ENCODE measurements at regions of chr13 and their contacts with region 1.

Region 1: GRCh38 chr13:79679334-79679733 is 198.4 kb downstream of the NDFIP2 start:
- DNase-seq: peak; percentile 83
- H3K4me3 ChIP-seq: no peak overlapping the region
- H3K27ac ChIP-seq: no peak overlapping the region
- H3K4me1 ChIP-seq: no peaks in the 10 kb centered on the region
- H3K27me3 ChIP-seq: no peaks in the 10 kb centered on the region
- CTCF ChIP-seq: peak; percentile 70 to 80
- POLR2A ChIP-seq: no peak

Region 2: DNA sequence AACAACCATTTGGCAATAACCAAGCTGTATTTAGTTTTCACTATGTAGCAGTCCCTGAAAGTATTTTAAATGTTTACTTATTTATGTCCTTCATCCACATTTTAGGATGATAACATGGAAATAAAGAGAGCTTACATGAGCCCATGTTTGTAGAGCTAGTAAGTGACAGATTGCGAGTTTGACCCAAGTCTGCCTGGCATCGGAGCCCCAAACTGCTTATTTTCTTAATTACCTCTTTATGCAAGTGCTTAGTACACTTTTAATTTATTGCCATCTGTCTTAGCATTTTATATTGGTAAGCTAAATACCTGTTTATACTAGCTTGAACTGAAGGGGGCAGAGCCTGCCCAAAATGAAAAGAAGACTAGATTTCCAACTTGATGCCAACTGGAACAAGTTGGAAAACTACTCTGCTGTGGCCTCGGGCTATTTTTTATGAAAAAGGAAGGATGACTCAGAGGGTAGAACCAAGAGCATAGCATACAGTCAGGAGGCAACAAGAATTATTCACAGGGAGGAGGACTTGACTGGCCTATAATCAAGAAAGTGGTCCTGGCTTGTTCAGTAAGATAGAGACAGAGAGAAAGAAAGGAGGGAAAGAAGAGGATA is 48.2 kb before region 1 on chr13:
- CTCF ChIA-PET with region 1: interaction called, 15 read pairs
- POLR2A ChIA-PET with region 1: no interaction called
- dilution Hi-C with region 1: no loop called
- intact Hi-C with region 1: no loop called
- DNase-seq: peak; percentile 93
- H3K4me3 ChIP-seq: no peak overlapping the region
- H3K27ac ChIP-seq: no peak overlapping the region
- H3K4me1 ChIP-seq: no peaks in the 10 kb centered on the region
- H3K27me3 ChIP-seq: no peaks in the 10 kb centered on the region
- CTCF ChIP-seq: peak in 1 of 2 donors; percentile 27
- POLR2A ChIP-seq: no peak

Region 3: DNA sequence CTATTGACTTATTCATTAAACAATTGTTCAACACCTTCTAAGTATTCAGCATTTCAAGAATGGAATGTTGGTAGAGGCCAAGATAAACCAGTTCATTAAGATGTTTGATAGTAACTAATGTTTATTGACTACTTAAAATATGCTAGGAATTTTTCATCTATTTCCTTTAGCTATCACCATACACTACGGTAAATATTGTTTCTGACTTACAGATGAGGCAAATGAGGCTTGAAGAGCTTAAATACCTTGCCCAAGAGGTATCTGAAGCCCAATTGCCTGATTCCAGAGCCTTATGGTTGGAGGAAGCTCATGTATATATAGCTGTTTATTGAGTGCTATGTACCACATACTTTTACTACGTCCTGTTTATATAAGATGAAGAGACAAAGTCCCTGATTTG is 87.8 kb after region 1 on chr13:
- CTCF ChIA-PET with region 1: interaction called, 15 read pairs
- POLR2A ChIA-PET with region 1: no interaction called
- dilution Hi-C with region 1: no loop called
- intact Hi-C with region 1: loop called (anchors 5 kb)
- DNase-seq: peak; percentile 73
- H3K4me3 ChIP-seq: no peak overlapping the region
- H3K27ac ChIP-seq: peak overlapping the region; percentile 76
- H3K4me1 ChIP-seq: peaks cover 14% of the 10 kb centered on the region
- H3K27me3 ChIP-seq: no peaks in the 10 kb centered on the region
- CTCF ChIP-seq: no peak
- POLR2A ChIP-seq: no peak

Region 4: GRCh38 chr13:79874396-79875360 is 195.3 kb after region 1 on chr13:
- CTCF ChIA-PET with region 1: interaction called, 3 read pairs
- POLR2A ChIA-PET with region 1: no interaction called
- dilution Hi-C with region 1: no loop called
- intact Hi-C with region 1: loop called (anchors 5 kb)
- DNase-seq: no peak
- H3K4me3 ChIP-seq: no peak overlapping the region
- H3K27ac ChIP-seq: no peak overlapping the region
- H3K4me1 ChIP-seq: peaks cover 6% of the 10 kb centered on the region
- H3K27me3 ChIP-seq: no peaks in the 10 kb centered on the region
- CTCF ChIP-seq: no peak
- POLR2A ChIP-seq: no peak

Region 5: DNA sequence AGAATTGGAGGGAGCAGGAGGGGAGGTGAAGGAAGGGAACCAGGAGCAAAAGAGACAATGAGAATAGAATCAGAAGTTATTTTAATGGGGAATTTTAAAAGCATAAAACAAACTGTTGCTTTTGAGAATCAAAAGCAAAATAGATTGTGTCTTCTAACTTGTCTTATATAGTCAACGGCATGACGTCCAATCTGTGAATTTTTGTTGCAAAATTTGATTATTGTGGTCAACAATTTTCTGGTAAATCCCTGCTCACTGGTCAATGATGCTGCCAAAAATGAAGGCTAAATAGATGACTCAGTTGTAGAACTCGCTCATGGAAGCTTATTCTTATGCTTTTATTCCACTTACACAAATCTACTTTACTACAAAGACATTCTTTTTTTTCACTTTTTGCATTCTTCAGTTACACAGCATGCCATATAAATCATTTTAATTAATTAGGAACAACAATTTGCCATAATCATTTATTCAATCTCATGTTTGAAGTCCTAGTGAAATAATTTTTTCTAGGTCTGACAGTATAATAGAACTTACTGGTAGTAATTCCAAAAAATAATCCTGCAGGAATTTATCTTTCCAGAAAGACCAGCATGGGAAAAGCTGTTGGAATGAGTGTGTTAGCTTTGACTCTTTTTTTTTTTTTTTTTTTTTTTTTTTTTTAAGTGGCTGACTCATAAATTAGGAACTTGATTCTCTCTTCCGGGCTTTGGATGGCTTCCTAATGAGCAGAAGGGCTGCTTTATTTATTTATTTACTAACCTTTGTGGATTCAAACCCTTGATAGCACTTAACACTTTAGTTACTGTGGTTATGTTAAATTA is 404.7 kb after region 1 on chr13:
- CTCF ChIA-PET with region 1: no interaction called
- POLR2A ChIA-PET with region 1: no interaction called
- dilution Hi-C with region 1: no loop called
- intact Hi-C with region 1: loop called (anchors 2 kb)
- DNase-seq: peak; percentile 75
- H3K4me3 ChIP-seq: peak overlapping the region in 1 of 3 experiments; percentile 52
- H3K27ac ChIP-seq: peak overlapping the region; percentile 97
- H3K4me1 ChIP-seq: peaks cover 27% of the 10 kb centered on the region
- H3K27me3 ChIP-seq: no peaks in the 10 kb centered on the region
- CTCF ChIP-seq: no peak
- POLR2A ChIP-seq: no peak

Region 6: DNA sequence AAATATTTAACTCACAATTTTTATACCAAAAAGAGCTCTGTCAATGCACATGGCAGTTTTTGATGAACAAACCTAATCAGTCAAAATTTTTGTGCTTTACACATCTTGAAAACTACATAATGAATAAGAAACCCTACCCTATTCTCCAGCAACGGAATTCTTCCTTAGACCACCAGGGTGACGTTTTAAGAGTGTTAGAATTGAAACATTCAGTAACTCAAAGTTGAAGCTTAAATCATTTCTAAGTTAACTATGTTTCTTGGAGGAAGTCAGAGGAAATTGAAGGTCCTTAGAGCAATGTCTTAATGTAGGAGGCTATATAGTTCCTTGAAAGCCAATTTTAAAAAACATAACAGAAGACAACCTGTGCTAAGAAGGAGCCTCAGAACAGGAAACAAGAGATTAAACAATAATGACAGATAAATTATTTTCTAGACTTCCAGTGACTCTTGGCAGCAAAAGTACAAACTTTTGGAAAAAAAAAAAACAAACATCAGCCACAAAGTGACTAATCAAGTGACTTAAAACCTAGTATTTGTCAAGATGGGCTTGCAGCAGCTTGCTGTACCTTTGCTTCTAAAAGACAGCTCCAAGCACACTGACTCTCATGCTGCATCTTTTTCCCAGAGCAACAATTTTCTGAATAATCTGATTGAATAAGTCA is 655.4 kb after region 1 on chr13:
- CTCF ChIA-PET with region 1: interaction called, 14 read pairs
- POLR2A ChIA-PET with region 1: no interaction called
- dilution Hi-C with region 1: no loop called
- intact Hi-C with region 1: no loop called
- DNase-seq: peak; percentile 24
- H3K4me3 ChIP-seq: no peak overlapping the region
- H3K27ac ChIP-seq: peak overlapping the region; percentile 7
- H3K4me1 ChIP-seq: peaks cover 34% of the 10 kb centered on the region
- H3K27me3 ChIP-seq: no peaks in the 10 kb centered on the region
- CTCF ChIP-seq: peak in 1 of 2 donors; percentile 1
- POLR2A ChIP-seq: no peak

Region 7: DNA sequence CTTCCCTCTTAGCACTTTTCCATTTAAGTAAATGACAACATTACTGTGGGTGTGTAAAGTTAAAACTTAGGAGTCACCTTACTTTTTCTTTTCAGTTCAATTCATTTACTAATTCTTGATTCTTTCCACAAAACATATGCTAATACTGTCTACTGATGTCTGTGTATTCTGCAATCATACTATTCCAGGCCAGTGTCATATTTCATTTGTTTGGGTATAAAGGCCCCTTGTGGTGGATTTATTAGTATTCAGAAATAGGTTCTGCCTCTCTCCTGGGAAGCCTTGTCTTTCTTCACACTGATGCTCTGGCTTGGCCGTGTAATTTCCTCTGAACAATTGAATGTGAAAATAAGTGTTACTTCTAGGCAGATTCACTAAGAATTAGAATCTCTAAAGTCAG is 1283.5 kb after region 1 on chr13:
- CTCF ChIA-PET with region 1: no interaction called
- POLR2A ChIA-PET with region 1: no interaction called
- dilution Hi-C with region 1: no loop called
- intact Hi-C with region 1: loop called (anchors 5 kb)
- DNase-seq: peak; percentile 32
- H3K4me3 ChIP-seq: no peak overlapping the region
- H3K27ac ChIP-seq: peak overlapping the region; percentile 70
- H3K4me1 ChIP-seq: peaks cover 15% of the 10 kb centered on the region
- H3K27me3 ChIP-seq: no peaks in the 10 kb centered on the region
- CTCF ChIP-seq: no peak
- POLR2A ChIP-seq: no peak